GM10248 (cell line): ENCODE measurements at regions of chr4 and their contacts with region 1.

Region 1: GRCh38 chr4:177047070-177047850 is 254.5 kb upstream of the VEGFC start:
- DNase-seq: peak; percentile 50
- CTCF ChIP-seq: peak; percentile 83

Region 2: DNA sequence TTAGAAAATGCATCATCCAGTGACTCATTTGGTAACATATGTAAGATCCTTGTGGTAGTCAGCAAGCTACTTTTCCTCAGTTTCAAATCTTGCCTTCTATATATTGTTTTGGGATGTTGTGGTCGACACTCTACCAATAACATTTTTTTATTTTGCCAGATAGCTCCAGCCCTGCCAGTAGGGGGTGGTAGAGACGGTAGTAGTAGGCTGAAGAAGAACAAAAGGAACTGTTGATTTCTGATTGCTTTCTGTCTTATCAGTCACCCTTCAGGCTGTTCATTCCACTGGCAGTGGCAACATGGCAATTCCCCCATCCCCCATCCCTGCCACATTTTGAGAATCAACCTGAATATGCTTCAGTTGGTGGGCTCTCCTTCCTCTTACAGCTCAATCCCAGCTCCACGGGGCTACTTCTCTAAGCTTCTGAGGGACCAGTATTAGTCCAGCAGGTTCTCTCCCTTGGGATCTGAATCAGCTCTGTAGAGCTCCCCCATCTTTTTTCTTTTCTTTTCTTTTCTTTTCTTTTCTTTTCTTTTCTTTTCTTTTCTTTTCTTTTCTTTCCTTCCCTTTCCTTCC is 83.1 kb before region 1 on chr4:
- CTCF ChIA-PET with region 1: interaction called, 10 read pairs
- POLR2A ChIA-PET with region 1: no interaction called
- DNase-seq: no peak
- CTCF ChIP-seq: peak; percentile 14

Region 3: GRCh38 chr4:177033135-177033534 is 14.1 kb before region 1 on chr4:
- CTCF ChIA-PET with region 1: interaction called, 73 read pairs
- POLR2A ChIA-PET with region 1: no interaction called
- DNase-seq: no peak
- CTCF ChIP-seq: no peak